Left cardiac atrium (tissue), 4 donors: ENCODE measurements at regions of chr3 and their contacts with region 1.

Region 1: DNA sequence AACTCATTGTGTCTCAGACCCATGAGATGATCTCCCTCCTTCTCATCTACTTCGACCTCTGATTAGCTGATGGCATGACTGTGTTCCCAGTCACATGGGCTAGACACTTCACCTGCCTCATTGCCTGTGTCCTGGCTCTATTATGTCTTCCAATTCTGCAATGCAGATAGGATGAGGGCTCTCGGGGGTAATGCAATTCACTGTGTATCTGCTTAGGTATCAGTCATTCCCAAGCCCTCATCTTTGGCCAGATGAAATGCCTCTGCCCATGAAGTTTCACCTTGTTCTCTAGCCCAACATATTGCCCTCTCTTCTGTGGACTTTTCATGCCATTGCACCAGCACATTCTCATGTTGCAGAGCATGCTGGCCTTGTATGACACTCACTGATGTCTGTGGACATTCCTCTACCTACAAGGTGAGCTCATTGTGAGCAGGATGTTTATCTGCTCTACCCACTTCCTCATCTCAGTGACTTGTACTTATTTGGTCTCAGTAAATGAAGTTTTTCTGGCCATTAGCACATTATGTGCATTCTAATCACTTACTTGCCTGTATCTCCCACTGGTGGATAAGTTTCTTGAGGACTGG is 32.3 kb downstream of the MOBP start:
- DNase-seq: no peak
- ATAC-seq: no peak

Region 2: DNA sequence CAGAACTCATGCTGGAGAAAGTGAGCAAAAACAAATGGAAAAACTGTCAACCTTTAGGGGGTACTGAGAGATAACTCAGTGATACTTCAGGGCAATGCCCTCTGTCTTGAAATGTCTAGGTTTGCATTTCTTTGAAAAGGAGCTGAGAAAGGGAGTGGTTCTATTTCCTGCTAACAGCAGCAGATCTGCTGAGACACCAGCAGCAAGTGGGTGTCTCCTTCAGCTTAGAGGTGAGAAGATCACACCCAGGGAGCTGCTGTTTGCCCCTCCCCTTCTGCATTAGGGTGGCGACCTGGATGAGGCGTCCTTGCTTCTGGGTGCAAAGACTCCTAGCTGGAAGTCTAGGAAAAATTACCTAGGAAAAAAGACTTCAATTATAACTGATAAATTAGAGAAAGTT is 265.0 kb before region 1 on chr3:
- intact Hi-C with region 1: no loop called
- DNase-seq: no peak
- ATAC-seq: no peak

Region 3: DNA sequence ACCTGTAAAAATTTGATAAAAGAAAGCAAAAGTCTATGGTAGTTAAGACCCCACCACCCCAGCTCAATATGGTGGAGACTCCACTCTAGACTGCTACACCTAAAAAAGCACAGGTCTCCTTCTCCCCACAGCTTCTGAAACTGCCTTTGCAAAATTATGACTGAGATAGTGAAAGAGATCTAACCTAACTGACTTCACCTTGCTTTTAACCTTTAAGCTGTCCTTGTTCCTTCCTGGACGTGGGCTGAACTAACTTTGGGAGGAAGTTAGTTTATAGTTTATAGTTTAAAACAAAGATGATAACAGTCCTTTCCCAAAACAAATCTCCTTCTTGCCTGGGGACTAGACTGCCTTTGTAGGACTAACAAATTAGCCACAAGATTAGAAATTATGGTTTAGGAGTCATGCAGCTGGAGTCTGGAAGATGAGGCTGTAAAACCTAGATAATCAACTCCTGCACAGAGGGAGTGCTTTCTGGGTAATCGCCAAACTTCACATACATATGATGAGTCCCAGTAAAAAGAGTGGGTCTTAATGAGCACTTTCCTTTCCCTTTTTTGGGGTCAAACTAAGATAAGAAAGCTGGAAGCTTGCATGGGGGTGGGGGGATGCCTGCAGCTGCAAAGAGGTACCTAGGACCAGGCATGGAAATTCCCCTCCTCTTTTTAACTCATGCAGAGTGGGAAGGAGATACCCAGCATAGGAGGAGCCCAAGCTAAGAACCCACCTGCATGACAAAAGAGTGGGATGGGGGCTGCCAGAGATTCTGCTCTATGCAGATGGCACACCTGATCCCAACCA is 152.8 kb before region 1 on chr3:
- intact Hi-C with region 1: no loop called
- DNase-seq: no peak
- ATAC-seq: no peak

Region 4: DNA sequence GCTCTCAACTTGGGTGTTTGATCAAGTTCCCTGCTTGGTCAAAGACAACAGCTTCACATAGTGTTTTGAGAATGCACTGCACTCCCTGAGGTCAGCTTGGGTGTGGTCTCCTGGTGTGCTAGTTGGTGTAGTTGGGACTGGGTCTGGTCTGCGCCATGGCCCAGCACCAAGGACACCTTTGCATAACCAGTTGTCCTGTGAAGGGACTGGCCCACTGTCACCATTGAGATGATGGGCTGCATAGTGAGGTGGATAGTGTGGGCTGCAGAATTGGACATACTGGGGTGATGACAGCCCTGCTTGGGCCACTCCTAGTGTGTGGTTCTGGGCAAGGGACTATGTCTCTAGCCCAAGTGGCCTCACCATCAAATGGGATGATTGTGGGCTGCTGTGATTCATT is 83.8 kb before region 1 on chr3:
- intact Hi-C with region 1: loop called in 1 of 2 experiments (anchors 2 kb)
- DNase-seq: no peak
- ATAC-seq: peak in 1 of 2 donors; percentile 20

Region 5: DNA sequence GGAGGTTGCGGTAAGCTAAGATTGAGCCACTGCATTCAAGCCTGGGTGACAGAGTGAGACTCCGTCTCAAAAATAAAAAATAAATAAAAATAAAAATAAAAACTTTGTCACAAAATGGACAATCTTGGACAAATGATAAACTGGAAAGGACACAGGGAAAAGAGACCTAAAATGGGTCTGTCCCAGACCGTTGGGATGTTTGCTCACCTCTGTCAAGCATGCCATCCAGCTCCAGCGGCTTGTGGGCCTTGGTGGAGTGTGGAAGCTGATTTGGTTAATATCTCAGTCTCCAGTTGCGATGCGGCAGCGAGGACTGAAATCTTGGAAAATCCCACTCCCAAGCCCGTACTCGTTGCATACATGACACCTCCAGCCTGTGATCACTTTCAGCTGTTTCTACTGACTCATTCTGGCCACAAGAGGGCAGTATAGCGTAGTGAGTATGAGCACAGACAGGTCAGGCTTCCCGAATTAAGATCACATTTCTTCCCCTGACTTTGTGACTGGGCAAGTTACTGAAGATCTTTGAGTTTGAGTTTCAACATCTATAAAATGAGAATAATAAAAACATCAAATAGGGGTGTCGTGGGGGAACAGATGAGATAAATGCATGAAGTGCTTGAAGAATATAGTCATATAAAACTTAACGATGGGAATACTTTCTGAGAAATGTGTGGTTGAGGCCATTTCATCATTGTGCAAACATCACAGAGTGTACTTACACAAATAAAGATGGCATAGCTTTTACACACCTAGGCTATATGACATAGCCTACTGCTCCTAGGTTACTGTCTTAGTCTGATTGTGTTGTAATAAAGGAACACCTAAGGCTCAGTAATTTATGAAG is 51.9 kb before region 1 on chr3:
- intact Hi-C with region 1: loop called in 1 of 2 experiments (anchors 2 kb)
- DNase-seq: peak; percentile 51
- ATAC-seq: peak; percentile 92 to 93

Region 6: DNA sequence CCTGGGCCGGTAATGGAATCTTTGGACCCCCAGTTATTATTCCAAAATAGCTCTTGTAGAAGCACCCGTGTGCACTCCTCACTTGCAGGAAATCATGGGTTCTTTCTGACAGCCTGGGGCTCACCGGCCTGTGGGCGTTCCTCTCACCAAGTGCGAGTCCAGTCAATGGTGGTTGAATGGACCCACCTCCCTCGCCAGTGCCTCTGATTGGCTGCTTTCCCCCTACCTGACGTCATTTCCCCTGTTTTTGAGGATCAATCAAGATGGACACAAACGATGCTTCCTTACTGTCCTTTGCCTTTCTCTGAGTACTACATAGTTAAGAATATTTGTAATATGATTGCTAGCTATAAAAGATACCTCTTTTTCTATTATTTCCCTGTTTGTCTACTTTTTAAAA is 14.2 kb before region 1 on chr3:
- intact Hi-C with region 1: no loop called
- DNase-seq: no peak
- ATAC-seq: no peak